ENCODE measurements at regions of chr10 and their contacts with region 1.

Region 1: DNA sequence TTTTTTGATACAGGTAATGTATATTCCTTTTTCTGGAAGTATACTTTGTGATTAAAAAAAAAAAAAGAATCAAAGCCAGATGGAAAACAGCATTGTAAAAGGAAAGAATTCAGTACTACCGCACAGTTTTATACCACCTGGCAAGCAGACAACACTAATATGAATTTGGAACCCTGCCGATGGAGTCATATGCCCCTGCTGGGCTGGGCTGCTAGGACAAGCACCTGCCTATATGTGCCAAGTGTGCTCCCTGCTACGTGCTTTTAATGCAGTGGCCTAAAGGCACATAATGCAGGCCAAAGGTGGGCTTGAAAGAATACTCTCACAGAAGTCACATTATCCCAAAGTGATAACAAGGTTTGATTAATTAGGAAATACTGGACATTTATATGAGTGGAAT is 29.8 kb upstream of the WAC start:
- DNase-seq: peak; percentile 57 to 62
- H3K4me3 ChIP-seq: no peak overlapping the region
- H3K4me3 Mint-ChIP-seq: peak overlapping the region; percentile 86
- H3K27ac Mint-ChIP-seq: peak overlapping the region; percentile 96
- H3K4me1 ChIP-seq: peaks cover 53% of the 10 kb centered on the region
- H3K4me1 Mint-ChIP-seq: peaks cover 30% of the 10 kb centered on the region
- H3K27me3 ChIP-seq: no peaks in the 10 kb centered on the region
- H3K27me3 Mint-ChIP-seq: no peaks in the 10 kb centered on the region
- CTCF ChIP-seq: peak; percentile 36 to 57

Region 2: DNA sequence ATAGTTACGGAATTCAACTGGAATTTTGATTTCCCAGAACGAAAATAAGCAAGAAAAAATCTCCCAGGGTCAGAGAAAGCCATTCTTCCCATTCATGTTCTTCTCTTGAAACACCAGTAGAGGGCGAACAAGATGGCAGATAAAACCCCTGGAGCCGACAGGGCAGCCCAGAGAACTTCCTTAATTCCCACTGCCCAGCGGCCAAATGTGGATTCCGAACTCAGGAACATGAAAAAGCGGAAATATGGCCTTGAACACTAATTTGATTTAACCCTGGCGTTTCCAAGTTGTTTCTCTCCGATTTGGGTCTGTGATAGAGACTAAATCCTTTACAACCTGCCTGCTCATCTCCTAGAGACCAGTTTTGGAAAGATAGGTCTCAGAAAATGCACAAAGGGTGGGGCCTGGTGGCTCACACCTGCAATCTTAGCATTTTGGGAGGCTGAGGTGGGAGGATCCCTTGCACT is 70.9 kb before region 1 on chr10:
- CTCF ChIA-PET with region 1: interaction called, 3 read pairs
- POLR2A ChIA-PET with region 1: interaction called, 6 read pairs
- intact Hi-C with region 1: loop called (anchors 1 kb)
- DNase-seq: peak; percentile 81 to 83
- H3K4me3 ChIP-seq: no peak overlapping the region
- H3K4me3 Mint-ChIP-seq: peak overlapping the region; percentile 41
- H3K27ac Mint-ChIP-seq: no peak overlapping the region
- H3K4me1 ChIP-seq: no peaks in the 10 kb centered on the region
- H3K4me1 Mint-ChIP-seq: no peaks in the 10 kb centered on the region
- H3K27me3 ChIP-seq: no peaks in the 10 kb centered on the region
- H3K27me3 Mint-ChIP-seq: no peaks in the 10 kb centered on the region
- CTCF ChIP-seq: peak; percentile 94 to 95

Region 3: DNA sequence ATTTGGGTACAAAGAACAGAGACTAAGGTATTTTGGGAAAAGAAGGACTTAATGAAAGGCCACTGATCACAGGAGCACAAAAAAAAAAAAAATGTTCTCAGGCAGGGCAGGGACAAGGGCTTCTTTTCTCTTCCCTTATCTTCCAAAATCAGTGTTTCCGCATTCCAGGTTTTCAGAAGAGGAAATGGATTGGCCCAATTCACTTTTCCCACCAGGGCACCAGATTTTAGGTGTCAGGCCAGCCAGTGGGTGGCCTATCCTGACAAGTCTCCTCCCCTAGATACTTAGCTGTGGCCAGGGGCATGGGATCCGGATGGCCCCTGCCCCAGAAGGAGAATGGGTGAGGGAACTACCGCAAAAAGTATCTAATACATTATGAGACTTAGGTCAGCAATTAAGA is 59.1 kb before region 1 on chr10:
- CTCF ChIA-PET with region 1: interaction called, 10 read pairs
- POLR2A ChIA-PET with region 1: interaction called, 5 read pairs
- intact Hi-C with region 1: no loop called
- DNase-seq: peak in 1 of 2 experiments; percentile 24
- H3K4me3 ChIP-seq: no peak overlapping the region
- H3K4me3 Mint-ChIP-seq: no peak overlapping the region
- H3K27ac Mint-ChIP-seq: no peak overlapping the region
- H3K4me1 ChIP-seq: peaks cover 10% of the 10 kb centered on the region
- H3K4me1 Mint-ChIP-seq: peaks cover 10% of the 10 kb centered on the region
- H3K27me3 ChIP-seq: no peaks in the 10 kb centered on the region
- H3K27me3 Mint-ChIP-seq: no peaks in the 10 kb centered on the region
- CTCF ChIP-seq: no peak

Region 4: DNA sequence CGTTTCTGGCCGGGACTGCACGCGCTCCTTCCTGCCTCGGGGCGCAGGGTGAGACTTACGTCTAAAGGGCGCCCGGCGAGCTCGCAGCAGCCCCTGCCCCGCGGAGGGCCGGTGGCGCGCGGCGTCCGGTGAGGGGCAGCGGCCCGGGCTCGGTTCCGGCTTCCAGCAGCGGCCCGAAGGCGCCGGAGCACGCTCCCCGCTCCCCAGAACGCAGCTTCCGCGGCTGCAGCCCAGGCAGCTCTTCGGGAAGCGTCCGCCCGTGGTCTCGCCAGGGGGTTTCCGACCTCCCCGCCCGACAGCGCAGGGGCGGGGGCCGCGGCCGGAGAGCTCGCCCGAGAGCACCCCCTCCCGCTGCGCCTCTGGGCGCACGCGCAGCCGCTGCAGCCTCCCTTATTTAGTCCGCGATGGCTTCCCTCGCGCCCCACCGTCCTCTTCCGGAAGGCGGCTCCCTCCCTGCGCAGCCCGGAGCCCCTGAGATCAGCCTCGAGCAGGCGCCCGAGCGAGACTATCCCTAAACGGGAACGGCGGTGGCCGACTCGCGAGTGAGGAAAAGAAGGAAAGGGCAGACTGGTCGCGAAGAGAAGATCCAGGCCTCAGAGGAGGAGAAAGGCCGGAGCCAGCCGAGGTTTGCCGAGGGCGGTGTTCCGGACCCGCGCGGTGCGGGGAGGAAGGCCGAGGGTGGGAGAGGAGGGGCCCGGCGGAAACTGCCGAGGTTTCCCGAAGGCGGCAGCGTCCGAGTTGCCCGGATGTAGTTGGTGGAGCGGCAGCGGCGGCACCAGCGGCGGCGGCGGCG is 29.5 kb after region 1 on chr10 and contains the start of gene WAC:
- CTCF ChIA-PET with region 1: interaction called, 5 read pairs
- POLR2A ChIA-PET with region 1: interaction called, 16 read pairs
- intact Hi-C with region 1: loop called (anchors 1 kb)
- DNase-seq: peak; percentile 97 to 99
- H3K4me3 ChIP-seq: peak within 1 kb of the TSS; percentile 98
- H3K4me3 Mint-ChIP-seq: peak within 1 kb of the TSS; percentile 100
- H3K27ac Mint-ChIP-seq: peak within 1 kb of the TSS; percentile 100
- H3K4me1 ChIP-seq: peaks cover 16% of the 10 kb centered on the region
- H3K4me1 Mint-ChIP-seq: peaks cover 24% of the 10 kb centered on the region
- H3K27me3 ChIP-seq: no peaks in the 10 kb centered on the region
- H3K27me3 Mint-ChIP-seq: no peaks in the 10 kb centered on the region
- CTCF ChIP-seq: peak in 1 of 2 experiments; percentile 49
- total RNA-seq, gene WAC: 196 TPM in 2 replicates

Region 5: GRCh38 chr10:28551086-28551485 is 48.0 kb after region 1 on chr10:
- CTCF ChIA-PET with region 1: interaction called, 10 read pairs
- POLR2A ChIA-PET with region 1: interaction called, 7 read pairs
- intact Hi-C with region 1: no loop called
- DNase-seq: no peak
- H3K4me3 ChIP-seq: no peak overlapping the region
- H3K4me3 Mint-ChIP-seq: no peak overlapping the region
- H3K27ac Mint-ChIP-seq: no peak overlapping the region
- H3K4me1 ChIP-seq: peaks cover 12% of the 10 kb centered on the region; the same call in 1 of the 2 replicates
- H3K4me1 Mint-ChIP-seq: peaks cover 57% of the 10 kb centered on the region
- H3K27me3 ChIP-seq: no peaks in the 10 kb centered on the region
- H3K27me3 Mint-ChIP-seq: no peaks in the 10 kb centered on the region
- CTCF ChIP-seq: no peak

Region 6: GRCh38 chr10:28587970-28588290 is 84.8 kb after region 1 on chr10:
- CTCF ChIA-PET with region 1: no interaction called
- POLR2A ChIA-PET with region 1: no interaction called
- intact Hi-C with region 1: loop called (anchors 5 kb)
- DNase-seq: peak in 1 of 2 experiments; percentile 34
- H3K4me3 ChIP-seq: no peak overlapping the region
- H3K4me3 Mint-ChIP-seq: no peak overlapping the region
- H3K27ac Mint-ChIP-seq: no peak overlapping the region
- H3K4me1 ChIP-seq: peaks cover 10% of the 10 kb centered on the region; the same call in 1 of the 2 replicates
- H3K4me1 Mint-ChIP-seq: peaks cover 22% of the 10 kb centered on the region
- H3K27me3 ChIP-seq: no peaks in the 10 kb centered on the region
- H3K27me3 Mint-ChIP-seq: no peaks in the 10 kb centered on the region
- CTCF ChIP-seq: peak in 1 of 2 experiments; percentile 43

Region 7: DNA sequence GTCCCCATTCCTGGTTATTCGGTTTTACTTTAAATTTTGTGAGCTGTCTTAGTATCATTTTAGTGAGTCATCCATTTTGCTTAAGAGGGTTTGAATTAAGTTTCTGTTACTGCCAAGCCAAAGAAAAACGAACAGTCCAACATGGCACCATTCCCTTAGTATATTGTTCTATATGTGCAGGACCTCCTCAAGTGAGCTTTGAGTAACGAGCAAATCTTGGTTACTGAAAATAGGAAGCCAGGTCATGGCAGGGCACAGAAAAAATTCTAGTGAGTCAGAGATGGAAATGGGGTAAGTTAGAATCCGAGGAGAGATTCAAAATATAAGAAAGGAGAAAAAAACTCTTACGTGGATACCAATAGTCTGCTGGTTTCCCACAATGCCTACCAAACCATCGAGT is 467.1 kb after region 1 on chr10:
- CTCF ChIA-PET with region 1: no interaction called
- POLR2A ChIA-PET with region 1: no interaction called
- intact Hi-C with region 1: no loop called
- DNase-seq: no peak
- H3K4me3 ChIP-seq: no peak overlapping the region
- H3K4me3 Mint-ChIP-seq: no peak overlapping the region
- H3K27ac Mint-ChIP-seq: no peak overlapping the region
- H3K4me1 ChIP-seq: peaks cover 5% of the 10 kb centered on the region
- H3K4me1 Mint-ChIP-seq: peaks cover 18% of the 10 kb centered on the region
- H3K27me3 ChIP-seq: no peaks in the 10 kb centered on the region
- H3K27me3 Mint-ChIP-seq: no peaks in the 10 kb centered on the region
- CTCF ChIP-seq: no peak

Region 8: GRCh38 chr10:29328983-29329382 is 825.9 kb after region 1 on chr10:
- CTCF ChIA-PET with region 1: no interaction called
- POLR2A ChIA-PET with region 1: no interaction called
- intact Hi-C with region 1: loop called (anchors 10 kb)
- DNase-seq: no peak
- H3K4me3 ChIP-seq: no peak overlapping the region
- H3K4me3 Mint-ChIP-seq: no peak overlapping the region
- H3K27ac Mint-ChIP-seq: peak overlapping the region; percentile 4
- H3K4me1 ChIP-seq: peaks cover 50% of the 10 kb centered on the region
- H3K4me1 Mint-ChIP-seq: peaks cover 35% of the 10 kb centered on the region
- H3K27me3 ChIP-seq: no peaks in the 10 kb centered on the region
- H3K27me3 Mint-ChIP-seq: no peaks in the 10 kb centered on the region
- CTCF ChIP-seq: no peak

Measured in Caco-2 (cell line).